Calu3 (cell line): ENCODE measurements at regions of chr15 and their contacts with region 1.

Region 1: DNA sequence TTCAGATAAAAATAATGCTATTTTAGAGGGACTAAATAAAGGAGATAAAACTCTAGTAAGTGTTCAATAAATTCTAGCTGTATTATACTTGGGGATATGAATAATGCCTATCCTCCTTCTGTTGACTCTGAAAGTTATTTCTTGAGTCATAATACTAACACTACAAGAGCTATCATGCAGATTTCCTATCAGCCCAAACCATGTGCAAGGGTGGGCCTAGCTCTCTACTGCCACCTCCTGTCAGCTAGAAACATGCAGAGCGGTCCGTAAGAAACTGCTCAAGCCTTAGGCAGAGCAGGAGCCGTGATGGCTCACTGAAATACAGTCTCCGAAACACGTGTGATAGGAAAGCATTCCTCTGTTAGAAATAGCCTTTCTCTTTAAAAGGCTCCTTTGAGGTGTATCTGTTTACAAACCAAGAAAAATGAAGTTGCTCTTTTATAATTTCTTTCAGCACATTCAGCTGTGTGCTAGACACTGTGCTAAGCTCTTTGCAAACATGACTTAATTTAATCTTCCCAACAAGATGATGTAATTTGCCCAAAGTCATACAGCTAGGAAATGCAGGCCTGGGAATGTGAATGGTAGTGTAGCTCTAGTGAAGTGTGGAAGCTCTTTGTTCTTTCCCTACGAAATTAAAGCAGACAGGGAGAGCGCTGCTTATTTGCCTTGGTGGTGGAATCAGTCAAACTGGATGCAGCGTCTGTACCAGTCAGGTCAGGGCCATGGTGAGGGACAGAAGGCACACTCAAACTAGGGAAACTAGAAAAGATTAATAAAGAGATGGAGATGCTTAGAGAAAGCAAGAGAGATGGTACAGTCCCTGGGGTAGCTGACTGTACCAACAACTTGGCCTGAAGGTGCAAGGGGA is 43.1 kb downstream of the MTHFS start:
- DNase-seq: peak; percentile 81
- H3K4me3 Mint-ChIP-seq: no peak overlapping the region
- H3K27ac Mint-ChIP-seq: no peak overlapping the region
- H3K4me1 Mint-ChIP-seq: peaks cover 11% of the 10 kb centered on the region
- H3K27me3 Mint-ChIP-seq: no peaks in the 10 kb centered on the region
- CTCF ChIP-seq: peak; percentile 89

Region 2: GRCh38 chr15:79339564-79340314 is 514.0 kb before region 1 on chr15:
- CTCF ChIA-PET with region 1: interaction called, 19 read pairs
- intact Hi-C with region 1: loop called (anchors 10 kb)
- DNase-seq: no peak
- H3K4me3 Mint-ChIP-seq: no peak overlapping the region
- H3K27ac Mint-ChIP-seq: no peak overlapping the region
- H3K4me1 Mint-ChIP-seq: peaks cover 13% of the 10 kb centered on the region
- H3K27me3 Mint-ChIP-seq: no peaks in the 10 kb centered on the region
- CTCF ChIP-seq: peak; percentile 78

Region 3: DNA sequence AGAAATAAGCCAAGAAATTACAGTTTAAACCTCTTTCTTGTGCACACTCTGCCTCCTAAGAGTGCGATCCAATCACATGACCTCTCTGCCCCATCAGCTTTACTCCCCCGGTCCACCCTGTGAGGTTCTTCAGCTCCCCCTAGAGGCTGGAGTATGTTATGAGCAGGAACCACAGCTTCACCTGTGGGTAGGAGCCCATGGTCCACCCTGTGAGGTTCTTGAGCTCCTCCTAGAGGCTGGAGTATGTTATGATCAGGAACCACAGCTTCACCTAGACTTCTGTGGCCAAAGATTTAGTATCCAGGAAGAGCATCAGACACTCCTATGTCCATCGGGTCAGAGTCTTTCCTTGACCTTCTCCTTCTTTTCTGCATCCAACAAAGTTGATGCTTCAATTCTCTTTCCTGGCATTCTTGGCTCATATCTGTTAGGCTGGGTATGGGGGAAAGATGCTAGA is 257.6 kb before region 1 on chr15:
- CTCF ChIA-PET with region 1: interaction called, 28 read pairs
- intact Hi-C with region 1: loop called (anchors 10 kb)
- DNase-seq: peak; percentile 79
- H3K4me3 Mint-ChIP-seq: no peak overlapping the region
- H3K27ac Mint-ChIP-seq: no peak overlapping the region
- H3K4me1 Mint-ChIP-seq: no peaks in the 10 kb centered on the region
- H3K27me3 Mint-ChIP-seq: peaks cover 68% of the 10 kb centered on the region
- CTCF ChIP-seq: peak; percentile 90

Region 4: GRCh38 chr15:79736435-79737000 is 117.2 kb before region 1 on chr15:
- CTCF ChIA-PET with region 1: no interaction called
- intact Hi-C with region 1: no loop called
- DNase-seq: peak; percentile 21
- H3K4me3 Mint-ChIP-seq: no peak overlapping the region
- H3K27ac Mint-ChIP-seq: no peak overlapping the region
- H3K4me1 Mint-ChIP-seq: peaks cover 14% of the 10 kb centered on the region
- H3K27me3 Mint-ChIP-seq: peaks cover 11% of the 10 kb centered on the region
- CTCF ChIP-seq: no peak

Region 5: DNA sequence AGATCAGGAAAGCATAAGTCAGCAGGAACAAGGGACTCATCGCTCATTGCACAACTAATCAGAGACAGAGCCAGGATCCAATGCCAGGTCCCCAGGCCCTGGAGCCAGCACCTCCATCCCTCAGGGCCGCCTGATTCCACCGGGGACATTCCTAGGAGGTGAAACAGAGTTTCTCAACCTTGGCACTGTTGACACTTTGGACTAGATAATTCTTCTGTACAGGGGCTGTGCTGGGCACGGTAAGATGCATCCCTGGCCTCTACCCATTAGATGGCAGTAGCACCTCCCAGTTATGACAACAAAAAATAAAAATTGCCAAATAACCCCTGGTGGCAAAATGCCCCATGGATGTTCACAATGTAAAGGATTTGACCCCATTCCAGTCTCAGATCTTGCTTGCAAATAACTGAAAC is 84.6 kb before region 1 on chr15:
- CTCF ChIA-PET with region 1: no interaction called
- intact Hi-C with region 1: loop called (anchors 5 kb)
- DNase-seq: peak; percentile 23
- H3K4me3 Mint-ChIP-seq: no peak overlapping the region
- H3K27ac Mint-ChIP-seq: no peak overlapping the region
- H3K4me1 Mint-ChIP-seq: no peaks in the 10 kb centered on the region
- H3K27me3 Mint-ChIP-seq: peaks cover 50% of the 10 kb centered on the region
- CTCF ChIP-seq: peak; percentile 52

Region 6: GRCh38 chr15:79872358-79873017 is 18.8 kb after region 1 on chr15:
- CTCF ChIA-PET with region 1: interaction called, 13 read pairs
- intact Hi-C with region 1: no loop called
- DNase-seq: peak; percentile 64
- H3K4me3 Mint-ChIP-seq: peak overlapping the region; percentile 45
- H3K27ac Mint-ChIP-seq: peak overlapping the region; percentile 89
- H3K4me1 Mint-ChIP-seq: peaks cover 57% of the 10 kb centered on the region
- H3K27me3 Mint-ChIP-seq: no peaks in the 10 kb centered on the region
- CTCF ChIP-seq: no peak

Region 7: DNA sequence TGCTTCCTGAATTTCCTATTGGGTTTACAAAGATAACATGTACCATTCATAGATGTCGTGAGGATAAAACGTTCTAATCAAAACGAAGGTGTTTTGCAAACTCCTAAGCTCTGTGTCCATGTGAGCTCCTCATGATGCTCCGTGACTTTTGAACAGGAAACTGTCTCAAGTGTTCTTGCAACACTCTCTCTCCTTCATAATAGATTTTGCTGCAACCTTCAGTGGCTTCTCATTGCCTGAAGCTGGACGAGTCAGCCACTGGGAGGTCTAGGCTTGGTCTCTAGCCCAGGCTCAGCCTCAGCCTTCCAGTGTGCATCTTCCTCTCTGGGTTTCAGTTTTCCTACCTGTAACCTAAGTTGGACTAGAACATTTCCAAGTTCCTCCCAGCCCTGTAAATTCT is 136.0 kb after region 1 on chr15:
- CTCF ChIA-PET with region 1: interaction called, 3 read pairs
- intact Hi-C with region 1: loop called (anchors 1 kb)
- DNase-seq: no peak
- H3K4me3 Mint-ChIP-seq: no peak overlapping the region
- H3K27ac Mint-ChIP-seq: no peak overlapping the region
- H3K4me1 Mint-ChIP-seq: peaks cover 15% of the 10 kb centered on the region
- H3K27me3 Mint-ChIP-seq: peaks cover 15% of the 10 kb centered on the region
- CTCF ChIP-seq: no peak